Head of caudate nucleus (tissue), 42 donors: ENCODE measurements at regions of chr11 and their contacts with region 1.

Region 1: GRCh38 chr11:115504276-115505158 is at the start of gene CADM1:
- DNase-seq: peak; percentile 97 to 100 (median 99)

Region 2: GRCh38 chr11:115334932-115335788 is 169.4 kb before region 1 on chr11:
- intact Hi-C with region 1: loop called (anchors 5 kb)
- DNase-seq: peak in 1 of 42 donors; percentile 15